Activated naive CD8-positive, alpha-beta T cell treated with anti-CD3 and anti-CD28 coated beads, Interleukin-2, amount 10 ng/mL, durations not matched to agents 7 days and 5 days (primary cell): ENCODE measurements at regions of chr1 and their contacts with region 1.

Region 1: GRCh38 chr1:25819576-25820246 is at the start of gene MTFR1L:
- DNase-seq: peak; percentile 94
- ATAC-seq: peak; percentile 83
- H3K4me3 Mint-ChIP-seq: peak within 1 kb of the TSS; percentile 93
- H3K27ac Mint-ChIP-seq: peak within 1 kb of the TSS; percentile 96
- H3K4me1 Mint-ChIP-seq: peaks cover 30% of the 10 kb centered on the region
- H3K27me3 Mint-ChIP-seq: no peaks in the 10 kb centered on the region
- total RNA-seq, gene MTFR1L: 40.8 to 41.3 TPM

Region 2: DNA sequence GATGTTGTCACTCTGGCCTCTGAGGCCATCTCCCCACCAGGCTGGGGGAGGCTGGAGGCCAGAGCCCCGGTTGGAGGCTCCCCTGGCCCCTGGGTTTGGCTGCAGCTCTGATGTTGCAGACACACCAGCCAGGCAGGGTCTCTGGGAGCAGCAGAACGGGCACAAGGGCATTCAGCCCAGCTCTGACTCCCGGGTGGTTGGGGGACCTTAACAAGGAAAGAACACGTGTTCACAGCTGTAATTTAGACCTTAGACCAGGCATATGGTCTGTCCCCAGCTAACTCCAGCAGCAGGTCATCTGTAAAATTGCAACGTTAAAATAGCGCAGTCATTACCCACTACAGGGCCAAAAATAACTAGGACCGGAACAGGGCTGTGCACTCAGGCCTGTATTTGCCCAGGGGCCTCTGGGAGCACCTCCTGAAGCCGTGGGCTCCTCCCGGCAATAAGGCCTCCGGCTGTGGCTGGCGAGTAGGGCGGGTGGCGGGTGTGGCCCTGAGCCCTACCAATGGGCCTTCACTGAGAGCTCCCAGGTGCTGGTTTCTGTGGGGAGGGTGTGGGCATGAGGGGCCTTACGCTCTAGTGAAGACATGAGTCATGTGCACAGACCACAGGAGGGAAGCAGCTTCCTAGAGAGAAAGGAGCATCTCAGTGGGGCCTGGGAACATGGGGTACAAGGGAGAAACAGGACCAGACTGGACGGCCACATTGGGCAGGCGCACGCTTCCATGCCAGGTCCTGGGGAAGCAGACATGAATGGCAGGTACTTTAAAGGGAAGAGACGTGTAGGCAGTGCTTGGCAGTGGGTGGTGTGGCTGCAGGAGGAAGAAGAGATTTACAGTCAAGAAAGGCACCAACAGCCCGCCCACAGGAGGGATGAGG is 270.2 kb before region 1 on chr1:
- POLR2A ChIA-PET with region 1: interaction called, 10 read pairs
- DNase-seq: peak; percentile 82
- ATAC-seq: peak; percentile 92
- H3K4me3 Mint-ChIP-seq: peak overlapping the region; percentile 74
- H3K27ac Mint-ChIP-seq: peak overlapping the region; percentile 91
- H3K4me1 Mint-ChIP-seq: peaks cover 76% of the 10 kb centered on the region
- H3K27me3 Mint-ChIP-seq: no peaks in the 10 kb centered on the region

Region 3: DNA sequence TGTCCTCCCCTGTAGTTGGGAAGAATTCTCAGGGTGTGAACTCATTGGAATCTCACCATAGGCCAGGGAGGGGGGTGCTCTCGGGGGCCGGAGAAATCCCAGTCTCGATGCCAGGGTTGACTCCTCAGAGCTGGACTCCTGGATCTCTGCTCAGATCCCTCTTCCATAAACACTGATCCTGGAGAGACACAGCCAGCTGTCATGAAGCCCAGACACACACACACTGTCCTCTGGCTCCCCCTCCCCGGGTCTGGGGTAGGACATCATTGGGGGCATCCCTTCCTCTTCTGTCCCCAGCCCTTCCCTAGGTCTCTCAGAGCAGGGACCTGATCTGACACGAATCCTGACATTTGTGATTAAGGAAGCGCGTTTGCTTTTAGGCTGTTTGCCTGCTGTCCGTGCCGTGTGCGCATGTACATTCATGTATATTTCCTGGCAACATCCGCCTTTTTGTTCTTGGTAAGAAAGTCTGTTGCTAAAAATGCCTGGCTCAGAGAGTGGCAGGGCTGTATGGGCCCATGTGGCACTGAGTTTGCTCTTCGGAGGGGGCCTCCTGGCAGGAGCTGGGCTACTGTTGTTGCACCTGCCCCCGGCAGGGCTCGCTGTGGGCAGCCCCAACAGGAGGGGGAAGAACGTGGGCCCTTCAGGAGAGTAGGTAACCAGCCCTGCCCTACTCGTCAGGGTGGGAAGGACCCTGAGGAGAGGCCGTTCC is 65.1 kb before region 1 on chr1:
- POLR2A ChIA-PET with region 1: no interaction called
- DNase-seq: no peak
- ATAC-seq: no peak
- H3K4me3 Mint-ChIP-seq: peak overlapping the region; percentile 3
- H3K27ac Mint-ChIP-seq: peak overlapping the region; percentile 45
- H3K4me1 Mint-ChIP-seq: peaks cover 27% of the 10 kb centered on the region
- H3K27me3 Mint-ChIP-seq: no peaks in the 10 kb centered on the region

Region 4: GRCh38 chr1:25799935-25800702 is 19.6 kb before region 1 on chr1 and contains the start of gene SELENON:
- POLR2A ChIA-PET with region 1: interaction called, 13 read pairs
- DNase-seq: peak; percentile 61
- ATAC-seq: peak; percentile 41
- H3K4me3 Mint-ChIP-seq: peak within 1 kb of the TSS; percentile 84
- H3K27ac Mint-ChIP-seq: peak within 1 kb of the TSS; percentile 43
- H3K4me1 Mint-ChIP-seq: peaks cover 32% of the 10 kb centered on the region
- H3K27me3 Mint-ChIP-seq: no peaks in the 10 kb centered on the region
- total RNA-seq, gene SELENON: 10.3 to 11.4 TPM

Region 5: GRCh38 chr1:25874934-25875855 is 55.5 kb after region 1 on chr1 and contains the start of gene PAQR7:
- POLR2A ChIA-PET with region 1: interaction called, 11 read pairs
- DNase-seq: peak; percentile 80
- ATAC-seq: peak; percentile 86
- H3K4me3 Mint-ChIP-seq: peak within 1 kb of the TSS; percentile 90
- H3K27ac Mint-ChIP-seq: peak within 1 kb of the TSS; percentile 66
- H3K4me1 Mint-ChIP-seq: peaks cover 9% of the 10 kb centered on the region
- H3K27me3 Mint-ChIP-seq: peaks cover 19% of the 10 kb centered on the region
- total RNA-seq, gene PAQR7: 4.7 to 5.2 TPM